MCF 10A (cell line): ENCODE measurements at regions of chr17 and their contacts with region 1.

Region 1: DNA sequence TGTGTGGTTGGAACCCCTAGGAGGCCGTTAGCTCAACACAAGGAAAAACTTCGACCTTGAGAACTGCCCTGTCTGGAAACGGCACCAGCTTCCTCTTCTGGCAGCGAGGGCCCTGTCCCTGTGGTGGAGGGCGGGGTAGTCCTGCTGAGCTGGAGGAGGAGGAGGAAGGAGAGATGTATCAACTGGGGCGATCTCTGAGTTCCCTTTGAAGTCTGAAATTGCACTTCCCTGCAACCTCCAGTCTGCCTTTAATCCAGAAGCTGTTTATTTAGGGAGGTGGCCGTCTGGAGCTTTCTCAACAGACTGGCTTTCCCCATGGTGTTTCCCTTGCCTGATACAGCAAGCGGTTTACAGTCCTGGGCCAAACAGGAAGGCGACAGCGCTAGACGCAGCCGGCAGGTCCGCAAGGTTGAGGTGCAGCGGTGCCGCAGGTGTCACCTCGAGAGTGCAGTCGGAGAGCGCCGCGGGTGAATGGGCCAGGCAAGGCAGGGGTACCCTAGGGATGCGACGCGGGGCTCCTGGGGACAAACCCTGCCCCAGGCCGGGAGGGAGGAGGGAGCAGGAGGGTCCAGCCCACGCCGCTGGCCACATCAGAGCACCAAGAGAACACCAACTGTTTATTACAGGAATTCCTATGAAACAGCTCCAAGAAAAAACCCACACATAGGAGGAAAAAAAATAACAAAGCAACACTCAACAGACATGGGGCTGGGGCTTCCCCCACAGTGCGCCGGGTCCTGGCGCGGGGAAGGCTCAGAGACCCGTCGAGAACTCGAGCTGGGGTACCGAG is 11.4 kb upstream of the MRPS23 start:
- DNase-seq: no peak
- H3K4me3 Mint-ChIP-seq: no peak overlapping the region
- H3K27ac Mint-ChIP-seq: no peak overlapping the region
- H3K4me1 Mint-ChIP-seq: peaks cover 14% of the 10 kb centered on the region
- H3K27me3 Mint-ChIP-seq: no peaks in the 10 kb centered on the region
- CTCF ChIP-seq: no peak

Region 2: DNA sequence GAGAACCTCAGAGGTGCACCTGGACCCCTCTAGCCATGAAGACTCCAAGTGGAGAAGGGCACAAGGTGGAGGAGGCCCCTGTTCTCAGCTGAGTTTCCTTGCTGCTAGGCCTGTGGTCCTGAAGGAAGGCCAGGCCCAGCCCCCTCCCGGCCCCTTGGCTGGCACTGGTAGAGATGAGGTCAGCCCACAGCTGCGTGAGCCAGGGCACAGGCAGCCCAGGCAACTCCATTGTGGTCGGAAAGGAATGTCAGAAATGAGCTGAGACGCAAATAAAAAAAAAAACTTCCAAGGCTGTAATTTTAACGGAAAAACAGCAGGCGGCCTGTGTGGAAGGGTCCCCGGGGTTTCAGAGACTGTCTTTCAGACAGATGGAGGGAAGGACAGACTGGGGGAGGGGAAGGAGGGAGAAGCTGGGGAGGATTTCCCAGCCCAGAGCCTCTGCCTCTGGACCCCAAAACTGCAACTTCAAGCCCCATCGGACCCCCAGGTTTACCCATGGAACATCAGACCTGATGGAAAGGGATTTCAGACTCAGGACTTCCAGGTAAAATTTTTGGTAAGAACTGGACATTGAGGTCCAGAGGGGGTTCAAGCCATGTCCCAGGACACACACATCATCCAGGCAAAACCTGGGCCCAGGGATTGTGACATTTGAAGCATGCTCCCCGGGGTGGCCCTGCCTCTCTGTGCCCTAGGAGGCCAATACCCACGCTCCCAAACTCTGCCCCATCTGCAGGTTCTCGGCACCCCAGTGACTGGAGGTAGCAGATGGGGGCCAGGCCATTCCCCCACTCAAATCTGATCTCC is 14.3 kb after region 1 on chr17:
- CTCF ChIA-PET with region 1: interaction called, 75 read pairs
- POLR2A ChIA-PET with region 1: interaction called, 6 read pairs
- intact Hi-C with region 1: loop called (anchors 1 kb)
- DNase-seq: peak; percentile 94
- H3K4me3 Mint-ChIP-seq: peak overlapping the region; percentile 41
- H3K27ac Mint-ChIP-seq: peak overlapping the region; percentile 51
- H3K4me1 Mint-ChIP-seq: peaks cover 45% of the 10 kb centered on the region
- H3K27me3 Mint-ChIP-seq: no peaks in the 10 kb centered on the region
- CTCF ChIP-seq: peak; percentile 52

Region 3: DNA sequence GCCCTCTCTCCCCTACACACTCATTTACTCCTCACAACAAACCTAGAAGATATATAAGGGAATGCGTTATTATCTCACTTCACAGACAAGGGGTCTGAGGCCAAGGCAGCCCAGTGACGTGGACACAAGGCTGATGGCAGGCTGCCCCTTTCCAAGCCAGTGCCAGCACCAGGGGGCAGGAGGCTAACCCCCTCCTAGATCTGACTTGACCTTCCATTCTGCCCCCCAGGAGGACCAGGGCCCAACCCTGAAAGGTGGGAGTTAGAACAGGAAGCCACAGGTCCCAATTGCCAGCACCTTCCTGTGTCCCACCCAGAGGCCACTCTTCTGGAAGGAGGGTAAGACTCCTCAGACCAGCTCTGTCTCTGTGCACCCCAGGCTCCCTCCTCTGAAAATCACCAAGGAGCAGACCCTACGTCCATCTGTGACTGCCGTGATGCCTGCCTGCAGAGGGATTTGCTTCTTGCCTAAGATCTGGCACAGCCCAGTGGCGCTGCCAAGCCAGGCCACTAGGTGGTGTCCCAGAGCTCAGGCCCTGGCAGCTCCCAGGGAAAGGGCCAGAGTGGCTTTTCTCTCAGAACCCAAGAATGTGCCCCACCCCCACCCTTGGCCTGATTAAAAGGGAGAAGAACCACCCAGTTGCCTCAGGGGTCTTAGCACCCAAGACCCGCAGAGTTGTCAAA is 31.1 kb after region 1 on chr17:
- CTCF ChIA-PET with region 1: interaction called, 14 read pairs
- POLR2A ChIA-PET with region 1: interaction called, 9 read pairs
- intact Hi-C with region 1: loop called (anchors 5 kb)
- DNase-seq: peak; percentile 91
- H3K4me3 Mint-ChIP-seq: peak overlapping the region; percentile 64
- H3K27ac Mint-ChIP-seq: peak overlapping the region; percentile 87
- H3K4me1 Mint-ChIP-seq: peaks cover 41% of the 10 kb centered on the region
- H3K27me3 Mint-ChIP-seq: no peaks in the 10 kb centered on the region
- CTCF ChIP-seq: peak; percentile 96

Region 4: GRCh38 chr17:57975044-57975443 is 113.8 kb after region 1 on chr17:
- CTCF ChIA-PET with region 1: interaction called, 13 read pairs
- POLR2A ChIA-PET with region 1: interaction called, 3 read pairs
- intact Hi-C with region 1: no loop called
- DNase-seq: no peak
- H3K4me3 Mint-ChIP-seq: no peak overlapping the region
- H3K27ac Mint-ChIP-seq: peak overlapping the region; percentile 53
- H3K4me1 Mint-ChIP-seq: peaks cover 13% of the 10 kb centered on the region
- H3K27me3 Mint-ChIP-seq: no peaks in the 10 kb centered on the region
- CTCF ChIP-seq: no peak